ENCODE measurements at regions of chr17 and their contacts with region 1.

Region 1: GRCh38 chr17:74759243-74759801 is 10.9 kb downstream of the NHERF1 start:
- DNase-seq: peak; percentile 82
- ATAC-seq: peak; percentile 90
- H3K4me3 Mint-ChIP-seq: peak overlapping the region; percentile 69
- H3K27ac Mint-ChIP-seq: peak overlapping the region; percentile 91
- H3K4me1 Mint-ChIP-seq: peaks cover 70% of the 10 kb centered on the region
- H3K27me3 Mint-ChIP-seq: no peaks in the 10 kb centered on the region

Region 2: DNA sequence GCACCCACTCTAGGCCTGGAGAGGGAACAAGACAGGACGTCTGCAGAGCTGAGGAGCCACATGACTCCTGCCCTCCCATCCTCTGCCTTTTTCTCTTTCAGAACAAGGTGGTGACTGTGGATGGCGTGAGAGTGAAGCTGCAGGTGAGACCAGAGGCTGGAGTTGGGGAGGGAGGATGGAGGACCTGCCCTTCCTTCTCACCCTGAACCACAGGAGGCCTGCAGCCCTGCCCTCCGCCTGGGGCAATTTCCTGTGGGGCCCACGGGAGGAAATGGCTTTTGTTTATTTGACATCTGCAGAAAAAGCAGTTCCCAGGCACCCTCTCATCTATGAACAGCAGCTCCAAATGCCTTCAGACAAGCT is 17.2 kb before region 1 on chr17:
- CTCF ChIA-PET with region 1: interaction called, 79 read pairs
- POLR2A ChIA-PET with region 1: interaction called, 8 read pairs
- DNase-seq: peak; percentile 85
- ATAC-seq: peak; percentile 32
- H3K4me3 Mint-ChIP-seq: peak overlapping the region; percentile 72
- H3K27ac Mint-ChIP-seq: peak overlapping the region; percentile 97
- H3K4me1 Mint-ChIP-seq: peaks cover 93% of the 10 kb centered on the region
- H3K27me3 Mint-ChIP-seq: no peaks in the 10 kb centered on the region

Region 3: DNA sequence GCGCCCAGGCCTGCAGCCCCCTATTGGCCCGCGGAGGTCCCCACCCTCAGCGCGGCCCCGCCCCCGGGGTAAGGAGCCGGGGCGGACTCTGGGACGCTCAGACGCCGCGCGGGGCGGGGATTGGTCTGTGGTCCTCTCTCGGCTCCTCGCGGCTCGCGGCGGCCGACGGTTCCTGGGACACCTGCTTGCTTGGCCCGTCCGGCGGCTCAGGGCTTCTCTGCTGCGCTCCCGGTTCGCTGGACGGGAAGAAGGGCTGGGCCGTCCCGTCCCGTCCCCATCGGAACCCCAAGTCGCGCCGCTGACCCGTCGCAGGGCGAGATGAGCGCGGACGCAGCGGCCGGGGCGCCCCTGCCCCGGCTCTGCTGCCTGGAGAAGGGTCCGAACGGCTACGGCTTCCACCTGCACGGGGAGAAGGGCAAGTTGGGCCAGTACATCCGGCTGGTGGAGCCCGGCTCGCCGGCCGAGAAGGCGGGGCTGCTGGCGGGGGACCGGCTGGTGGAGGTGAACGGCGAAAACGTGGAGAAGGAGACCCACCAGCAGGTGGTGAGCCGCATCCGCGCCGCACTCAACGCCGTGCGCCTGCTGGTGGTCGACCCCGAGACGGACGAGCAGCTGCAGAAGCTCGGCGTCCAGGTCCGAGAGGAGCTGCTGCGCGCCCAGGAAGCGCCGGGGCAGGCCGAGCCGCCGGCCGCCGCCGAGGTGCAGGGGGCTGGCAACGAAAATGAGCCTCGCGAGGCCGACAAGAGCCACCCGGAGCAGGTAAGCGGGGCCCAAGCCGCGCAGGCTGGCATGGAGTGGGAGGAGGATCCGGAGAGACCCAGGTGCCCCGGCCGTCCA is 10.6 kb before region 1 on chr17 and contains the start of gene NHERF1:
- CTCF ChIA-PET with region 1: interaction called, 79 read pairs
- POLR2A ChIA-PET with region 1: interaction called, 26 read pairs
- DNase-seq: peak; percentile 95
- ATAC-seq: peak; percentile 90
- H3K4me3 Mint-ChIP-seq: peak within 1 kb of the TSS; percentile 99
- H3K27ac Mint-ChIP-seq: peak within 1 kb of the TSS; percentile 90
- H3K4me1 Mint-ChIP-seq: peaks cover 55% of the 10 kb centered on the region
- H3K27me3 Mint-ChIP-seq: no peaks in the 10 kb centered on the region
- total RNA-seq, gene NHERF1: 286 to 296 TPM

Region 4: GRCh38 chr17:74770498-74771318 is 11.4 kb after region 1 on chr17:
- CTCF ChIA-PET with region 1: interaction called, 47 read pairs
- POLR2A ChIA-PET with region 1: interaction called, 11 read pairs
- DNase-seq: peak; percentile 77
- ATAC-seq: peak; percentile 78
- H3K4me3 Mint-ChIP-seq: no peak overlapping the region
- H3K27ac Mint-ChIP-seq: peak overlapping the region; percentile 61
- H3K4me1 Mint-ChIP-seq: peaks cover 46% of the 10 kb centered on the region
- H3K27me3 Mint-ChIP-seq: no peaks in the 10 kb centered on the region

Region 5: DNA sequence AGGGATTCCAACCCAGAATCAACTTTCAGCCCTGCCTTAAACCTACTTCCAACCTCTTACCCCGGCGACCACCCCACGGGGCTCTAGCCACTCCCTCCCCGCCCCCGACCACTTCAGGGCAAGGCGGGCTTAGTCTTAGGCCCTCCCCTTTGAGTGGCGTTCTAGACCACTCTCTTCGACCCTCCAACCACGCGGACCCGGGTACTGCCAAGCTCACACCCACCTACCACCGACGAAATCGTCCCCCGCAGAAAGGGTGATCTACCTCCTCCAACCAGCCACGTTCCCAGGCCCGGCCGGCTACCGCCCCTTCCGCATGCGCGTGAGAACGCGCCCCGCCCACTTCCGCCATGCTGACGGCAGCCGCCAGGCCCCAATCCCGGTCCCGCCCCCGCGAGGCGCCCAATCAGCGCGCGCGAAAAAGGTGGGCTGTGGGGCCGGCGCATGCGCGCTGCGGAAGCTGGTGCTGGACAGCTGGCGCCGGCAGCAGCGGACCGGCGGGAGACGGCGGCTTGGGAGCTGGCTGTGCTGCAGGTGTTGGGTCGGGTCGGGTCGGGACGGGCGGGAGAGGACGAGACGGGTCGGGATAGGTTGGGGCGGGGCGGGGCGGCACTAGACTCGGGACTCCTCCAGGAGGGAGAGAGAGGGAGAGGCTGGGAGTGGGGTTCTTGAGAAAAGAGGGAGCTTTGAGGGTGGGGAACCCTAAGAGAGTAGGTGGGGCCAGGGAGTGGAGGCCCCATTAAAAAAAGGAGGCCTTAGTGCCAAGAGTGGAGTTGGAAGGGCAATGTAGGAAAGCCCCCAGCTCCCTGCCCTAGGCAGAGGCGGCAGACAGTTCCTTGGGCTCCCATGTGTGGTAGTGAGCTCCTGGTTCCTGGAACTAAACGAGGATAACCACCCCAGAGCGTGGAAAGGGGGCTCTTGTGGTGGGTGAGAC is 17.0 kb after region 1 on chr17 and contains the start of gene NAT9:
- CTCF ChIA-PET with region 1: interaction called, 47 read pairs
- POLR2A ChIA-PET with region 1: interaction called, 11 read pairs
- DNase-seq: peak; percentile 99
- ATAC-seq: peak; percentile 83
- H3K4me3 Mint-ChIP-seq: peak within 1 kb of the TSS; percentile 97
- H3K27ac Mint-ChIP-seq: peak within 1 kb of the TSS; percentile 89
- H3K4me1 Mint-ChIP-seq: peaks cover 70% of the 10 kb centered on the region
- H3K27me3 Mint-ChIP-seq: no peaks in the 10 kb centered on the region
- total RNA-seq, gene NAT9: 28.3 to 30.7 TPM

Region 6: GRCh38 chr17:74790161-74791054 is 31.1 kb after region 1 on chr17:
- CTCF ChIA-PET with region 1: interaction called, 26 read pairs
- POLR2A ChIA-PET with region 1: no interaction called
- DNase-seq: no peak
- ATAC-seq: peak; percentile 19
- H3K4me3 Mint-ChIP-seq: peak overlapping the region; percentile 39
- H3K27ac Mint-ChIP-seq: peak overlapping the region; percentile 68
- H3K4me1 Mint-ChIP-seq: peaks cover 47% of the 10 kb centered on the region
- H3K27me3 Mint-ChIP-seq: no peaks in the 10 kb centered on the region

Region 7: DNA sequence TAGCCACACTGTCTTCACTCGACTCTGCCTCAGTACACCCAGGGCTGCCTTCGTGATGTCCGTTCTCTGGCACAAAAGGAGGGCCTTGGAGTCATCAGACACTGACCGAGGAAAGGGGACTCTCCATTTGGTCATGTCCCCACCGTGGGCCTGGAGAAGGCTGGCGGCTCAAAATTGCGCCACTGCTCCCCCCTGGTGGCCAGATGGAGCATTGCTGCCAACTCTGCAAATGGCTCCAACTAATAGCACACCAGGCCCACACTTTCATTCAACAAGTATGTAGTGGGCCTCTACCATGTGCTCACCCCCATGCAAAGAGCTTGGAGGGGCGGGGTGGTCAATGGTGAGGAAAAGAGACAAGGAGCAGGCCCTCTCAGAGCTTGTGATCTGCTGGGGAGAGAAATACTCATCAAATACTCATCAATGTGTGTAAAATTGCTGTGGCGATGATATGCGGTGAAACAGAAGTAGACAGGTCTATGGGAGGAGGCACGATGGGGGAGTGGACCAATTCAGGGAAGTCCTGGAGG is 105.6 kb after region 1 on chr17:
- CTCF ChIA-PET with region 1: interaction called, 11 read pairs
- POLR2A ChIA-PET with region 1: no interaction called
- DNase-seq: peak; percentile 80
- ATAC-seq: peak; percentile 60
- H3K4me3 Mint-ChIP-seq: no peak overlapping the region
- H3K27ac Mint-ChIP-seq: no peak overlapping the region
- H3K4me1 Mint-ChIP-seq: peaks cover 23% of the 10 kb centered on the region
- H3K27me3 Mint-ChIP-seq: peaks cover 18% of the 10 kb centered on the region